Kidney (tissue), 22 donors: ENCODE measurements at regions of chr3 and their contacts with region 1.

Region 1: GRCh38 chr3:98154686-98155085 is 7.4 kb downstream of the OR5H14 start:
- DNase-seq: no peak
- H3K4me3 ChIP-seq: no peak overlapping the region
- H3K27ac ChIP-seq: no peak overlapping the region
- H3K4me1 ChIP-seq: no peaks in the 10 kb centered on the region
- H3K27me3 ChIP-seq: no peaks in the 10 kb centered on the region
- CTCF ChIP-seq: no peak

Region 2: DNA sequence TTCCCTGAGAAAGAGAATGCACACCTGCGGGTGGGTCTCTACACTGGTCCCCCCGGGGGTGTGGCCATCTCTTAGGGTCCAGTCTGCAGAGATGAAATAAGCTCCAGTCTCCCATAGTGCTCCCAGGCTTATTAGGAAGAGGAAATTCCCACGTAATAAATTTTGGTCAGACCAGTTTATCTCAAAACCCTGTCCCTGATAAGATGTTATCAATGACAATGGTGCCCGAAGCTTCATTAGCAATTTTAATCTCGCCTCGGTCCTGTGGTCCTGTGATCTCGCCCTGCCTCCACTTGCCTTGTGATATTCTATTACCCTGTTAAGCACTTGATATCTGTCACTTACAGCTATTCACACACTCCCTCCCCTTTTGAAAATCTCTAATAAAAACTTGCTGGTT is 58.6 kb after region 1 on chr3:
- intact Hi-C with region 1: loop called (anchors 2 kb)
- DNase-seq: no peak
- H3K4me3 ChIP-seq: no peak overlapping the region
- H3K27ac ChIP-seq: no peak overlapping the region
- H3K4me1 ChIP-seq: no peaks in the 10 kb centered on the region
- H3K27me3 ChIP-seq: no peaks in the 10 kb centered on the region
- CTCF ChIP-seq: no peak

Region 3: DNA sequence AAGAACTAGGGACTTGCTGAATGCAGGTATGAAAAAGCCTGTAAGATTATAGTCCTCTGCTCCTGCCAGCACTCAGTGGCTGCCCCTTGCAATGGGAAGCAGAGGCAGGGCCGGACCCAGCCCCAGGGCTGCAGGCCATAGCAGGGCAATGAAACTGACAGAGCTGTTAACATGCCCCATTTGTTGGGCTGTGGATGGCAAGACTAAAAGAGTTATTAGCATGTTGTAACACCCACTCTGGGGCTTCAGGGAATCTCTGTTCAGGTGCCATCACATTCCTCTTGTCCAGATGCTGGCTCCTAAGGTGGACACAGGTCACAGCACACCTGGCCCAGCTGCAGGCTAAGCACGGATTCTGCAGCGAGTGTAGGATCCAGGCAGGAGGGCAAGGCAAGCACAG is 120.2 kb after region 1 on chr3:
- intact Hi-C with region 1: no loop called
- DNase-seq: no peak
- H3K4me3 ChIP-seq: no peak overlapping the region
- H3K27ac ChIP-seq: no peak overlapping the region
- H3K4me1 ChIP-seq: no peaks in the 10 kb centered on the region
- H3K27me3 ChIP-seq: no peaks in the 10 kb centered on the region
- CTCF ChIP-seq: no peak